Endothelial cell of umbilical vein (primary cell): ENCODE measurements at regions of chr19 and their contacts with region 1.

Region 1: DNA sequence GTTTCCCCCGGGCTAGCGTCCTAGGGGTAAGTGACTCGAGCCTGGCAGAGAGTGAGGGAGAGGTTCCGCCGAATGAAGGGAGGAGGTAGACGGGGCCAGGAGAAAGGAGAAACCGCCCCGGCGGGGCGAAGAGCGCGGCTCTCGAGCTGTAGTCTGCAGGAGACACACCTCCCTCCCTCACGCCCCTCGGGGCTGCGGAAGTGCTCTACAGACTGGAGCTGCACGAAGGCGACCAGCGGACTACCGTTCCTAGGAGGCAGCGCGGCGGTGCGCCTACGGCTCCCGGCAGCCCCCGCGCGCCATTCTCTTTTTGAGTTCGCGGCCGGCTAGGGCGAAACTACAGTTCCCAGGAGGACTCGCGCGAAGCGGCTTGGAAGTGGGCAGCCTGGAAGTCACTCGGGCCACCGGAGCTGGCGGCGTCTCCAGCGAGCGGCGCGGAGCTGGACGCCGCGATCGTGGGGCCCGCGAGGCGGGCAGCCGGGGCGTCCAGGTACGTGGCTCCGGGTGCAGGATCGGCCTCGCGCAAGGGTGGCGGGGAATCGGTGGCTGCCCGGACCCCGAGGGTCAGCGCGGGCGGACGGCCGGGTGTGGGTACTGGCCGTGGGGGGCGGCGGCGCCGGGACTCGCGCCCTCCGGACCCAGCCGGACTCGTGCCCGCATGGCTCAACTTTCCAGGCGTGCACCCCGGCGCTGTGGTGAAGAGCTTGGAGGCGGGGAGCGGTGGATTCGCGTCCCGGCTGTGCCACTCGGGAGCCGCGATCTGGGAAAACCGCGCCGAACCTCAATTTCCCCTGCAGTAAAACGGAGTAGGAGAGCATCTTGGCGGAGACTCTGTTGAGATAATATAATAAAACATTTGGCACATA is at the start of gene SIPA1L3:
- DNase-seq: peak; percentile 97
- H3K4me3 ChIP-seq: peak within 1 kb of the TSS; percentile 40 to 99 (median 83)
- H3K27ac ChIP-seq: peak within 1 kb of the TSS; percentile 50
- H3K4me1 ChIP-seq: peaks cover 15% of the 10 kb centered on the region
- H3K27me3 ChIP-seq: no peaks in the 10 kb centered on the region
- CTCF ChIP-seq: no peak
- POLR2A ChIP-seq: peak; percentile 82
- total RNA-seq, gene SIPA1L3: 44.4 and 47.2 TPM in 2 replicates

Region 2: DNA sequence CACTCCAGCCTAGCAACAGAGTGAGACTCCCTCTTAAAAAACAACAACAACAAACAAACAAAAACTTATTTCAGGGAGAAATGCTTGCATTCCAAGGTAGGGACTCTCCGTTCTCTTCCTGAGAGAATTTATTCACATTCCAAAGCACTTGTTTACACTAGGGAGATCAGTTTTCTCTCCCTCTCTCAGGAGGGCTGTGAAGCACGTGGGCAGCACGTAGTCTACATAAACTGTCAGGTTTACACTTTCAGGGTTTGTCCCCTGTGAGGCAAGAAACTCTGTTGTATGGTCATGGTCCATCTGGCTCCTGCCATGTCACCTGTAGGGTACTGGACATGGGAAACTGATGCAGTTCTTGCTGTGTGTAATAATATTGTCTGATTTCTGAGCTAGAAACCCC is 32.3 kb before region 1 on chr19:
- CTCF ChIA-PET with region 1: no interaction called
- POLR2A ChIA-PET with region 1: no interaction called
- dilution Hi-C with region 1: no loop called
- intact Hi-C with region 1: no loop called
- DNase-seq: no peak
- H3K4me3 ChIP-seq: no peak overlapping the region
- H3K27ac ChIP-seq: no peak overlapping the region
- H3K4me1 ChIP-seq: no peaks in the 10 kb centered on the region
- H3K27me3 ChIP-seq: no peaks in the 10 kb centered on the region
- CTCF ChIP-seq: no peak
- POLR2A ChIP-seq: no peak

Region 3: DNA sequence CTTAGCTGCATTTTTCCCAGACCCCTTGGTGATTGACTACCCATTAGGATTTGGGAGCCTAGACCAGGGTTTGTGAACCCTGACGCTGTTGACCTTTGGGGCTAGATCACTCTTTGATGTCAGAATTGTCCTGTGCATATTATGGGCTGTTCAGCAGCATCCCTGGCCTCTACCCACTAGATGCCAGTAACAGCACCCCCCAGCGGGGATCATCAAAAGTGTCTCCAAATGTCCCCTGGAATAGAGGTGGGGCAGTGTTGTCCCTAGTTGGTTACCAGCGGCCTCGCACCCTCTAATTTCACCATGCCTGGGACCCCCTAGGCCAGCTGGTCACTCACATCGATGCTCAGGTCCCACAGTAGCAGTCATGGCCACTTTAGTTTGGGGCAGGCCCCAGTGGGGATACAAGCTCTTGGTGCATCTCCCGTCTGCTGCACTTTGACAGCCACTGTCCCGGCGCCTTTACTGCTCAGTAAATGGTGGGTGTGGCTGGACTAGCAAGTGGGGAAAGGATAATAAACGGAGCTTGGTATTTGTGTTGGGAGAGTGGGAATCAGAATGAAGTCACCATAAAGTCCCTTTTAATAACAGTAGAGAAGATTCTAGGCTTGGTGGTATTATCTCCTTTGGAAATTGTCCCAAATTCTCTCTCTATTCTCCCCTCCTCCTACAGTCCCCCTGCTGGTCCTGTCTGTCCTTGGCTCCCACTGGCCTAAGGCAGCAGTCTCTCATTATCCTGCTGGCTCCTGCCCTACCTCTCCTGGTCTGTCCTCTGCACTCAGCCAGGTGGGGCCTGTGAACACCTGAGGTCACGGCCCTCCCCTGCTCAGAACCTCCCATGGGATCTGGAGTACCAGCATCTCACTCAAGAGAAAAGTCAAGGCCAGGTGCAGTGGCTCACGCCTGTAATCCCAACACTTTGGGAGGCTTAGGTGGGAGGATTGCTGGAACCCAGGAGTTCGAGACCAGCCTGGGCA is 80.5 kb after region 1 on chr19:
- CTCF ChIA-PET with region 1: interaction called, 12 read pairs
- POLR2A ChIA-PET with region 1: no interaction called
- dilution Hi-C with region 1: no loop called
- intact Hi-C with region 1: no loop called
- DNase-seq: no peak
- H3K4me3 ChIP-seq: no peak overlapping the region
- H3K27ac ChIP-seq: no peak overlapping the region
- H3K4me1 ChIP-seq: no peaks in the 10 kb centered on the region
- H3K27me3 ChIP-seq: no peaks in the 10 kb centered on the region
- CTCF ChIP-seq: peak; percentile 9 to 17
- POLR2A ChIP-seq: no peak

Region 4: DNA sequence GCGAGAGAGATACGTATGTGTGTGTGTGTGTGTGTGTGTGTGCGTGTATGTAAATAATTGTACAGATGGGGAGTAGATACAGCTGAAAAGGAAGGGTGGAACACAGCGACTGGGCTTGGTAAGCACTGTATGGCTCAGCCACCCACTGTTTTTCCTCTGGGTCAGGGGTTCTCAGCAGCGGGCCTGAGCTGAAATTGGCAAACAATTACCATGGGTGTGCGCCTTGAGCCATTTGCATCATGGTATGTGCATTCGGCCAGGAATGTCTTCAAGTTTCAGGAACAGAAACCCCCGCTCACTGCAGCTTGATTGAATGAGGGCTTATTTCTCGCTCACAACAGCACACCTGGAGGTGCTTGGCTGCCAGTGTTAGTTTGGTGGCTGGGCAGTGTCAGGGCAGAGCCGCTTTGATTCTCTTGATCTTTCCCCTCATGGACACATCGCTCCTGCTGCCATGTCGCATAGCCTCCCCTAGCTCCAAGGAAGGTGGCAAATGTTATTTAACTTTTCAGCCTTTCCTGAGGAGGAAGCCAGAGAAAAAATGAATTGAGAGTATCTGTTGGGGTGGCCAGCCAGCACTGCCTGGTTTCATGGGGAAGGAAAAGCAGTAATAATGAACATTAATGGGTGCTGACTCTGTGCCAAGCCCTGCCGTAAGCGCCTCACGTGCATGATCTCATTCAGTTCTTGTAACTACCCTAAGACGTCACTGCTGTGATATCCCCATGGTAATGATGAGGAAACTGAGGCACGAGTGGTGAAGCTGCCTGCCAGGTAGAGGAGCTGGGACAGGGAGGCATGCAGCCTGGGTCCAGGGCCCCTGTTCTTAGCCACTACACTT is 126.8 kb after region 1 on chr19:
- CTCF ChIA-PET with region 1: interaction called, 15 read pairs
- POLR2A ChIA-PET with region 1: no interaction called
- dilution Hi-C with region 1: no loop called
- intact Hi-C with region 1: no loop called
- DNase-seq: no peak
- H3K4me3 ChIP-seq: no peak overlapping the region
- H3K27ac ChIP-seq: no peak overlapping the region
- H3K4me1 ChIP-seq: peaks cover 12% of the 10 kb centered on the region
- H3K27me3 ChIP-seq: no peaks in the 10 kb centered on the region
- CTCF ChIP-seq: no peak
- POLR2A ChIP-seq: no peak

Region 5: GRCh38 chr19:38089440-38089839 is 182.3 kb after region 1 on chr19:
- CTCF ChIA-PET with region 1: interaction called, 62 read pairs
- POLR2A ChIA-PET with region 1: no interaction called
- dilution Hi-C with region 1: no loop called
- intact Hi-C with region 1: no loop called
- DNase-seq: no peak
- H3K4me3 ChIP-seq: no peak overlapping the region
- H3K27ac ChIP-seq: no peak overlapping the region
- H3K4me1 ChIP-seq: no peaks in the 10 kb centered on the region
- H3K27me3 ChIP-seq: no peaks in the 10 kb centered on the region
- CTCF ChIP-seq: no peak
- POLR2A ChIP-seq: no peak

Region 6: GRCh38 chr19:38142176-38143035 is 235.3 kb after region 1 on chr19:
- CTCF ChIA-PET with region 1: interaction called, 59 read pairs
- POLR2A ChIA-PET with region 1: no interaction called
- dilution Hi-C with region 1: no loop called
- intact Hi-C with region 1: no loop called
- DNase-seq: peak; percentile 37
- H3K4me3 ChIP-seq: no peak overlapping the region
- H3K27ac ChIP-seq: no peak overlapping the region
- H3K4me1 ChIP-seq: no peaks in the 10 kb centered on the region
- H3K27me3 ChIP-seq: no peaks in the 10 kb centered on the region
- CTCF ChIP-seq: peak; percentile 81 to 84
- POLR2A ChIP-seq: no peak

Region 7: GRCh38 chr19:38335949-38336637 is 429.0 kb after region 1 on chr19:
- CTCF ChIA-PET with region 1: interaction called, 13 read pairs
- POLR2A ChIA-PET with region 1: no interaction called
- dilution Hi-C with region 1: no loop called
- intact Hi-C with region 1: no loop called
- DNase-seq: peak; percentile 96
- H3K4me3 ChIP-seq: peak overlapping the region; percentile 52 to 83 (median 75)
- H3K27ac ChIP-seq: peak overlapping the region; percentile 22
- H3K4me1 ChIP-seq: peaks cover 3% of the 10 kb centered on the region
- H3K27me3 ChIP-seq: no peaks in the 10 kb centered on the region
- CTCF ChIP-seq: no peak
- POLR2A ChIP-seq: no peak